ENCODE measurements at regions of chr10 and their contacts with region 1.

Region 1: DNA sequence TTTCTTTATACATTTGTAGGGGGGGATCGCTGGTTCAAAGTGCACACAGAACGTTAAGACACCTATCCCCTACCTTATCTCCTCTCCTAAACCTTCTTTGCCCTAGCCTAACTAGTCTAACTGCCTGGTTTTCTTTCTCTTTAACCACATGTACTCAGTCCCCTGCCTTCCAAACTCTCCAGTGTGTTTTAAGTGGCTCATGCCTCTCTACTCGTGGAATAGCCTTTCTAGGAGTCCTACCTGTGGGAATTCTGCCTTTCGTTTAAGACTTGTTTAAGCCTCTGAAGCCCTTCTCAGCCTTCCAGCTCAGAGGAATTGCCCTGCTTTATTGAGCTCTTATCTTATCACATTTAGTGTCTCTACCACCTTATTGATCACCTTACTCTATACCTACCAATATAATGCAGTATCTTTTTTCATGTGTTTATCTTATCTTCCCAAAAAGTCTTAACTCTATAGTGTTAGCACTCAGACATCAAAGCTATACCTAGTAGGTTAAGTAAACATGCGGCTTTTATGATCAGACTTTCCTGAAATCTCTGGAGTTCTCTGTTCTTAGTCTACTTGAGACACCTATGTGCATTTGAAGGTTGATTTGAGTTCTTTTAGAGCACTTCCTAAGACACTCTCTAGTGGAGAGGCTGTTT is 50.7 kb downstream of the ARID5B start:
- DNase-seq: peak; percentile 87 to 89
- H3K4me3 ChIP-seq: no peak overlapping the region
- H3K4me3 Mint-ChIP-seq: peak overlapping the region; percentile 60
- H3K27ac Mint-ChIP-seq: peak overlapping the region; percentile 67
- H3K4me1 ChIP-seq: peaks cover 54% of the 10 kb centered on the region
- H3K4me1 Mint-ChIP-seq: peaks cover 47% of the 10 kb centered on the region
- H3K27me3 ChIP-seq: no peaks in the 10 kb centered on the region
- H3K27me3 Mint-ChIP-seq: no peaks in the 10 kb centered on the region
- CTCF ChIP-seq: no peak

Region 2: GRCh38 chr10:61682323-61682722 is 269.8 kb before region 1 on chr10:
- CTCF ChIA-PET with region 1: no interaction called
- POLR2A ChIA-PET with region 1: no interaction called
- intact Hi-C with region 1: no loop called
- DNase-seq: no peak
- H3K4me3 ChIP-seq: no peak overlapping the region
- H3K4me3 Mint-ChIP-seq: no peak overlapping the region
- H3K27ac Mint-ChIP-seq: no peak overlapping the region
- H3K4me1 ChIP-seq: no peaks in the 10 kb centered on the region
- H3K4me1 Mint-ChIP-seq: no peaks in the 10 kb centered on the region
- H3K27me3 ChIP-seq: no peaks in the 10 kb centered on the region
- H3K27me3 Mint-ChIP-seq: peaks cover 7% of the 10 kb centered on the region
- CTCF ChIP-seq: peak; percentile 37 to 42

Region 3: GRCh38 chr10:61852261-61852660 is 99.9 kb before region 1 on chr10:
- CTCF ChIA-PET with region 1: no interaction called
- POLR2A ChIA-PET with region 1: no interaction called
- intact Hi-C with region 1: loop called (anchors 1 kb)
- DNase-seq: no peak
- H3K4me3 ChIP-seq: no peak overlapping the region
- H3K4me3 Mint-ChIP-seq: no peak overlapping the region
- H3K27ac Mint-ChIP-seq: peak overlapping the region; percentile 51
- H3K4me1 ChIP-seq: peaks cover 46% of the 10 kb centered on the region
- H3K4me1 Mint-ChIP-seq: peaks cover 44% of the 10 kb centered on the region
- H3K27me3 ChIP-seq: no peaks in the 10 kb centered on the region
- H3K27me3 Mint-ChIP-seq: no peaks in the 10 kb centered on the region
- CTCF ChIP-seq: no peak

Region 4: DNA sequence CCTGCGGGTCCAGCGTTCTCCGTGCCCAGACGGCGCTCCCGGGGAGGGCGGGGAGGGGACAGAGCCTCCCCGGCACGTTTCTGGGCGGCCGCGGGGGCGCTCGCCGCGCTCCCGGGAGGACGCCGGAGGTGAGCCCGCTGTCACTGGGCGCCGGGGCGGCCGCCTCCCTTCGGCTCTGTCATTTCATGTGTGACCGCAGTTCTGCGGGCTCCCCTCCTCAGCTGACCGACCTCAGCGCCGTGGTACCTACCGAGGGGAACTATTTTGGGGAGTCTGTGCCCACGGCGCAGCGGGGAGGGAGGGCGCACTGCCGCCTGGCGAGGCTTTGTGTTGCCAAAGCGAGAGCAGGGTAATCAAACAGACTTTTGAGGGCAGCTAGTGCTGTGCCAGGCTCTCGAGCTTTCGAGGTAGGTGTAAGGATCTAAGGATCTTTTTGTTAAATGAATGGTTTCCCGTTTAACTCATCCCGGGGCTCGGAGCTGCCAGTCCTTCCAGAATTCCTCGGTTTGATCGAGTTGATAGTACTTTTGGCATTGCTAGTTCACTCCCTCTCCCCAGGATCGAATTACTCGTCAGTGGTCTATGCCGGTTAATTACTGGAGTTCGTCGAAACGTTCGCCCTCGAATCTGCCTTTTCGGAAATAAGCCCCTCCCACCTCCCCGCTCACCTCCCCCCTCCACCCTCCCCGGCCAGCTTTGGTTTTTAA is 48.8 kb before region 1 on chr10:
- CTCF ChIA-PET with region 1: interaction called, 3 read pairs
- POLR2A ChIA-PET with region 1: interaction called, 10 read pairs
- intact Hi-C with region 1: loop called (anchors 1 kb)
- DNase-seq: peak in 1 of 2 experiments; percentile 84
- H3K4me3 ChIP-seq: peak overlapping the region; percentile 97
- H3K4me3 Mint-ChIP-seq: peak overlapping the region; percentile 89
- H3K27ac Mint-ChIP-seq: peak overlapping the region; percentile 99
- H3K4me1 ChIP-seq: peaks cover 57% of the 10 kb centered on the region
- H3K4me1 Mint-ChIP-seq: peaks cover 34% of the 10 kb centered on the region
- H3K27me3 ChIP-seq: no peaks in the 10 kb centered on the region
- H3K27me3 Mint-ChIP-seq: no peaks in the 10 kb centered on the region
- CTCF ChIP-seq: peak; percentile 14 to 16

Region 5: DNA sequence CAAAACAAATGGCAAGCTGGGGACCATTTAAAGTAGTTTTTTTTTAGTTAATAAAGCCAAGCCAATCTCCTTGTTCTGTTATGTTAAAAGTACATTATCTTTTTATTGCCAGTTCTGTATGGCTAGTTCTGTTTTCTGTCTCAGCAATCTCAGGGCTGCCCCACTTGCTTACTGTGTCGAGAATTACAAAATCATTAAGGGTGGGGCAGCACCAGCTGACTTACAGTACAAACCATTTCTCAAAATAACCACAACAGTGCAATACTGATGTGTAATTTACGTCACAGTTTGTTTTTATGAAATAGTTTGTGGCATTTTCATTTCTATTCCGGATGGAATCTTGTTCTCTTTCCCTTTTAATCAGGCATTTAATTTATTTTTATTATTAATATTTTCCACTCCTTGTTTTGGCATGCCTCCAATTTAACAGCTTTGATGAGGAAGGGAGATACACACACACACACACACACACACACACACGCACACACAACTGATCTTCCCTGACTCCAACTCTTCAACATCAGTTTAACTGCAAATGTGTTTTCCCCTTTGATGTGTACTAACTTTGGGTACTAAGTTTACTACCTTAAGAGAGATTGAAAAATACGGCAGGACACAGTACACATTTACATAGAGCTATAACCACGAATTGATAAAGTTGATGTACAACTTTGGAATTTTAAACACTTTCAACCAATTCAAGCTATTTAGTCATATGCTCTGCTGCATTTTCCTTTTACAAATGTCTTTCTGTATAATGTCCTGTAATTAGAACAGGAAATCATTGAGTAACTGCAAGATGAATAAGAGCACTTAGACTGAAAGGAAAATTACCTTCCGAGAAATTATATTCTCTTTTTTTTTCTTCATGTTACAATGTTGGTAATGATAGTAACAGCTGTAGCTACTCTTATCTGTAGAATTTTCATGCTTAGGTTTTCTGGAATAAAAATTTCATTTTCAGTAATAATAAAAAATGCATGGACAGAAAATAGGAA is 40.8 kb after region 1 on chr10:
- CTCF ChIA-PET with region 1: no interaction called
- POLR2A ChIA-PET with region 1: no interaction called
- intact Hi-C with region 1: loop called (anchors 2 kb)
- DNase-seq: no peak
- H3K4me3 ChIP-seq: no peak overlapping the region
- H3K4me3 Mint-ChIP-seq: peak overlapping the region; percentile 1
- H3K27ac Mint-ChIP-seq: peak overlapping the region; percentile 34
- H3K4me1 ChIP-seq: peaks cover 59% of the 10 kb centered on the region
- H3K4me1 Mint-ChIP-seq: peaks cover 38% of the 10 kb centered on the region
- H3K27me3 ChIP-seq: no peaks in the 10 kb centered on the region
- H3K27me3 Mint-ChIP-seq: no peaks in the 10 kb centered on the region
- CTCF ChIP-seq: no peak

Region 6: DNA sequence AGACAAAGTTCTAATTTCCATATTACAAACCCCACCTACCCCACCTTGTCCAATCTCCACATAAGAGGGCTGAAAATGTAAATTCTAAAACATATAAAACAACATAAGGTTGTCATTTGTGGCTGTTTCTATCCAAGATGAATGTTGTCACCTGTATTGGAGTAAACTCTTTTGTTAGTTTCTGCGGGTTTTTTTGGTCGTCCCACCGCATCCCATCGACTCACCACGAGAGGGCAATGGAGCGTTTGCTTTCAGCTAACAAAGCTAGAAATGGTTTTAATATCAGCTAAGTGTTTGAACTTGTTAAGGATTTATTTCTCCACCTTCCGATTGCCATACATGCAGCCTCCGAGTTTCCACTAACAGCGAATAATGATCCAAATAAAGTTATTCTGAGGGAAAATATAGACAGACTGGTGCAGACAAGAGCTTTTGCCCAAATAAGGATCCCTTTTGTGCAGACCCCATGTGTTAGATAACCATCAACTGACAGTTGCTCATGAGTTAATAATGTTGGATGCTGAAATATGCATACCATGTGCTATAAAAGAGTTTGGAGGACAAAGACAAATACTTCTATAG is 86.5 kb after region 1 on chr10:
- CTCF ChIA-PET with region 1: no interaction called
- POLR2A ChIA-PET with region 1: no interaction called
- intact Hi-C with region 1: loop called (anchors 1 kb)
- DNase-seq: peak; percentile 84 to 85
- H3K4me3 ChIP-seq: no peak overlapping the region
- H3K4me3 Mint-ChIP-seq: peak overlapping the region; percentile 50
- H3K27ac Mint-ChIP-seq: peak overlapping the region; percentile 56
- H3K4me1 ChIP-seq: peaks cover 95% of the 10 kb centered on the region
- H3K4me1 Mint-ChIP-seq: peaks cover 93% of the 10 kb centered on the region
- H3K27me3 ChIP-seq: no peaks in the 10 kb centered on the region
- H3K27me3 Mint-ChIP-seq: no peaks in the 10 kb centered on the region
- CTCF ChIP-seq: peak; percentile 93 to 98

Region 7: GRCh38 chr10:62244780-62245467 is 292.8 kb after region 1 on chr10:
- CTCF ChIA-PET with region 1: no interaction called
- POLR2A ChIA-PET with region 1: no interaction called
- intact Hi-C with region 1: loop called (anchors 1 kb)
- DNase-seq: peak; percentile 70 to 82
- H3K4me3 ChIP-seq: no peak overlapping the region
- H3K4me3 Mint-ChIP-seq: no peak overlapping the region
- H3K27ac Mint-ChIP-seq: peak overlapping the region; percentile 33
- H3K4me1 ChIP-seq: peaks cover 25% of the 10 kb centered on the region
- H3K4me1 Mint-ChIP-seq: peaks cover 39% of the 10 kb centered on the region
- H3K27me3 ChIP-seq: no peaks in the 10 kb centered on the region
- H3K27me3 Mint-ChIP-seq: no peaks in the 10 kb centered on the region
- CTCF ChIP-seq: peak; percentile 95 to 98